ENCODE measurements at regions of chr20 and their contacts with region 1.

Region 1: GRCh38 chr20:17693444-17694001 is 6.2 kb upstream of the BANF2 start:
- DNase-seq: peak in 1 of 2 donors; percentile 86
- H3K4me3 ChIP-seq: peak overlapping the region in 2 of 3 donors; percentile 2 to 18
- H3K27ac ChIP-seq: peak overlapping the region; percentile 65 to 80
- H3K4me1 ChIP-seq: no peaks in the 10 kb centered on the region
- H3K27me3 ChIP-seq: no peaks in the 10 kb centered on the region
- CTCF ChIP-seq: no peak
- POLR2A ChIP-seq: no peak

Region 2: DNA sequence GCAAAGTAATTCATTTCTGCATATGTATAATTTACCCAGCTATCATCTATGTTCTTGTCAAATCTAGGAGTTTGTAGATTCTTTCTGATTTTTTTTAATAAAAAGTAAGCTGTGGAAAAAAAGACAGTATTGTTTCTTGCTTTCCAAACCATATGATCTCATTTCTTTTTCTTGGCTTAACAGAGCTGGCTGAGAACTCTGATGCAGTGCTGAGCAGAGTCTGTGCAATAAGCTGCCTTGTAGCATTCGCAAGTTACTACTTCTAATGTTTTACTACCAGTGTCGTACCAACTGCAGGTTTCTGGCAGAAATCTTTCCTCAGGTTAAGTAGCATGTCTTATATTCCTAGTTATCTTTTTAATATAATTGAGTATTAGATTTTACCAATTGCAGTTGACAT is 27.0 kb before region 1 on chr20:
- intact Hi-C with region 1: no loop called
- DNase-seq: no peak
- H3K4me3 ChIP-seq: no peak overlapping the region
- H3K27ac ChIP-seq: no peak overlapping the region
- H3K4me1 ChIP-seq: peaks cover 0 to 4% of the 10 kb centered on the region in 2 donors
- H3K27me3 ChIP-seq: no peaks in the 10 kb centered on the region
- CTCF ChIP-seq: no peak
- POLR2A ChIP-seq: no peak

Region 3: DNA sequence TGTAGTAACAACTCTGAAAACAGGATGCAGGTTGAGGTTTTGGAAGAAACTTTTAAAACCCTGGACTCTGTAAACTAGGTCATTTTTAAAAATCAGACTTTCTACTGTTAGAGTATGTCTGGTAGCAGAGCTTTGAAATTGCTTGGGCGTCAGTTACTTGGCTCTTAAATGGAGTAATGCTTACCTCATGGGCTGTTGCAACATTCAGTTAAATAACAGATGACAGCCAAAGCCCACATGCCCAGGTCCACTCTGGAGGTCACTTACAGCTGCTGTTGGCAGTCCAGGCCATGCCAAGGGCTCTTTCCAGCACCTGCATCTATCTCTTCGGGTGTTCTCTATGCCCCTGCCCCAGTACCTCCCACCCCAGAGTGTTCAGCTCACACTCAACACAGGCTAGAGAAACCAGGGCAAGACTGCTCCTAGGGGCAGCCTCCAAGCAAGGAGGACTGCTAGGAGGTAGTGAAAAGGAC is 102.6 kb after region 1 on chr20:
- intact Hi-C with region 1: loop called (anchors 10 kb)
- DNase-seq: peak in 1 of 2 donors; percentile 40
- H3K4me3 ChIP-seq: no peak overlapping the region
- H3K27ac ChIP-seq: peak overlapping the region; percentile 78 to 80
- H3K4me1 ChIP-seq: peaks cover 0 to 20% of the 10 kb centered on the region in 2 donors
- H3K27me3 ChIP-seq: no peaks in the 10 kb centered on the region
- CTCF ChIP-seq: no peak
- POLR2A ChIP-seq: no peak